HepG2 (cell line): ENCODE measurements at regions of chr7 and their contacts with region 1.

Region 1: GRCh38 chr7:17130281-17131059 is 168.0 kb upstream of the AHR start:
- DNase-seq: peak; percentile 98
- ATAC-seq: peak; percentile 96
- H3K4me3 ChIP-seq: peak overlapping the region in 2 of 3 experiments; percentile 20 to 23; a peak in 2 of 6 replicates
- H3K27ac ChIP-seq: peak overlapping the region; percentile 86
- H3K4me1 ChIP-seq: peaks cover 91% of the 10 kb centered on the region
- H3K27me3 ChIP-seq: no peaks in the 10 kb centered on the region
- CTCF ChIP-seq: no peak
- EP300 ChIP-seq: peak; percentile 80 to 98
- POLR2A ChIP-seq: no peak
- RAD21 ChIP-seq: no peak

Region 2: GRCh38 chr7:16989811-16990413 is 140.6 kb before region 1 on chr7:
- CTCF ChIA-PET with region 1: no interaction called
- POLR2A ChIA-PET with region 1: interaction called, 13 read pairs
- in situ Hi-C with region 1: no loop called
- intact Hi-C with region 1: loop called (anchors 2 kb)
- DNase-seq: peak; percentile 100
- ATAC-seq: peak; percentile 96
- H3K4me3 ChIP-seq: peak overlapping the region; percentile 15 to 51 (median 36); a peak in 5 of 6 replicates
- H3K27ac ChIP-seq: peak overlapping the region; percentile 76
- H3K4me1 ChIP-seq: peaks cover 81% of the 10 kb centered on the region
- H3K27me3 ChIP-seq: no peaks in the 10 kb centered on the region
- CTCF ChIP-seq: no peak
- EP300 ChIP-seq: peak; percentile 49 to 98; a peak in 2 of 4 replicates
- POLR2A ChIP-seq: peak in 1 of 2 experiments; percentile 41; a peak in 1 of 4 replicates
- RAD21 ChIP-seq: no peak; the same call in none of the 2 replicates

Region 3: GRCh38 chr7:17021180-17021579 is 109.3 kb before region 1 on chr7:
- CTCF ChIA-PET with region 1: no interaction called
- POLR2A ChIA-PET with region 1: interaction called, 10 read pairs
- in situ Hi-C with region 1: no loop called
- intact Hi-C with region 1: loop called (anchors 1 kb)
- DNase-seq: peak; percentile 95
- ATAC-seq: peak; percentile 86
- H3K4me3 ChIP-seq: no peak overlapping the region
- H3K27ac ChIP-seq: peak overlapping the region; percentile 81
- H3K4me1 ChIP-seq: peaks cover 52% of the 10 kb centered on the region
- H3K27me3 ChIP-seq: no peaks in the 10 kb centered on the region
- CTCF ChIP-seq: no peak
- EP300 ChIP-seq: peak; percentile 87 to 99
- POLR2A ChIP-seq: no peak
- RAD21 ChIP-seq: no peak

Region 4: DNA sequence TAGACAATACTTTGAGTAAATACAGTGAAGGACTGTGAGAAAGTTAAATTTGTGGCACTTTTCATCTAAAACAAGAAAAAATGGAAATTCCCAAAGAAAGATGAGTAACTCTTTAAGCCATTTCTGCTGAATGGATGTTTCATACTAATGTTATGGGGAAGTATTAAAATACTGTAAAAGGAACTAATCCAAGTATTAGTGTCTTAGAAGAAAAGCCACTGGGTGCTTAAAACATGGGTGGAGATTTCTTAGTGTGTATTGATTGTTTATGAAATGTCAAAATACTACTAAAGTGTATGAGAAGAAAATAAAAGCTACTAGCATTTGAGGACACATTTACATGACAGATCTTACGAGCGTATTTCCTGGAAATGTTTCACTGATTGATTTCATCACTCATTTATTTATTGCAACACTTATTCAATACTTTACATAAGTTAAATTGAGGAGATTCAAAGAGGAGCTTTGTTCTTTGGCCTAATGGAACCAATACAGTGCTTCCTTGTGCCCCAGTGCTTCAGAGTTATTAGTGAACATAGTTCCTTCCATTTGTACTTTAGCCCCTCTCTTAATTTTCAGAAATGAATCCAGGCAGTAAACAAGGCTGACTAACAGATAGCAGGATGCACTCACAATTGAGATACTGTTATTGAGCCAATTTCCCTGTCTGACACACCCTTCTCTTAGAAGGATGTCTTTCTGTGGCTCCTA is 12.5 kb after region 1 on chr7:
- CTCF ChIA-PET with region 1: no interaction called
- POLR2A ChIA-PET with region 1: interaction called, 22 read pairs
- in situ Hi-C with region 1: no loop called
- intact Hi-C with region 1: no loop called
- DNase-seq: peak; percentile 92
- ATAC-seq: peak; percentile 97
- H3K4me3 ChIP-seq: peak overlapping the region in 2 of 3 experiments; percentile 38 to 42; a peak in 3 of 6 replicates
- H3K27ac ChIP-seq: peak overlapping the region; percentile 80
- H3K4me1 ChIP-seq: peaks cover 66% of the 10 kb centered on the region
- H3K27me3 ChIP-seq: no peaks in the 10 kb centered on the region
- CTCF ChIP-seq: no peak
- EP300 ChIP-seq: peak in 1 of 2 experiments; percentile 84; a peak in 2 of 4 replicates
- POLR2A ChIP-seq: no peak
- RAD21 ChIP-seq: no peak

Region 5: DNA sequence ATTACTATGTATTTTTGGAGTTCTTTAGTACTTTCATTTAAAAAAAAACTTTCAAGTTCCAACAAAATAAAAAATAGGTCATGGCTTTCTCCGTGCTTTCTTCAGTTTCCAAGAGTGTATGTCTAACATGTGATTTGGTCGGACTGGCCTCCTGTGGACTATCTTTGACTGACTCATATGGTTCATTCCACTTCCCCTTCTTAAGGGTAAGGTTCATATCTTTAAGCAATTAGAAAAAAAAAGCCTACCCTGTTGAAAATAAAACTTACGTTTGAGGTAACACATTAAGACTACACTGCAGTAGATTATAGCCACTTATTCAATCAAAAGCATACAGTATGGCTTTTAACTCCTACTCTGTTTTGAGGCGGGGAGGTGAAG is 55.2 kb after region 1 on chr7:
- CTCF ChIA-PET with region 1: no interaction called
- POLR2A ChIA-PET with region 1: interaction called, 10 read pairs
- in situ Hi-C with region 1: no loop called
- intact Hi-C with region 1: no loop called
- DNase-seq: no peak
- ATAC-seq: no peak
- H3K4me3 ChIP-seq: no peak overlapping the region
- H3K27ac ChIP-seq: peak overlapping the region; percentile 83
- H3K4me1 ChIP-seq: peaks cover 43% of the 10 kb centered on the region
- H3K27me3 ChIP-seq: no peaks in the 10 kb centered on the region
- CTCF ChIP-seq: no peak
- EP300 ChIP-seq: no peak
- POLR2A ChIP-seq: no peak
- RAD21 ChIP-seq: no peak